OCI-LY7 (cell line): ENCODE measurements at regions of chr9 and their contacts with region 1.

Region 1: GRCh38 chr9:88388172-88388885 is at the start of gene SPIN1:
- DNase-seq: peak; percentile 81
- H3K4me3 ChIP-seq: peak within 1 kb of the TSS; percentile 80
- H3K27ac ChIP-seq: no peak within 1 kb of the TSS
- H3K4me1 ChIP-seq: peaks cover 15% of the 10 kb centered on the region
- CTCF ChIP-seq: 0 out of 2 replicates have a peak, but pooled peaks have one; percentile 9
- total RNA-seq, gene SPIN1: 20.0 and 20.1 TPM in 2 replicates

Region 2: GRCh38 chr9:88161144-88161543 is 227.2 kb before region 1 on chr9:
- CTCF ChIA-PET with region 1: no interaction called
- POLR2A ChIA-PET with region 1: no interaction called
- intact Hi-C with region 1: no loop called
- DNase-seq: no peak
- H3K4me3 ChIP-seq: no peak overlapping the region
- H3K27ac ChIP-seq: no peak overlapping the region
- H3K4me1 ChIP-seq: no peaks in the 10 kb centered on the region
- CTCF ChIP-seq: no peak

Region 3: DNA sequence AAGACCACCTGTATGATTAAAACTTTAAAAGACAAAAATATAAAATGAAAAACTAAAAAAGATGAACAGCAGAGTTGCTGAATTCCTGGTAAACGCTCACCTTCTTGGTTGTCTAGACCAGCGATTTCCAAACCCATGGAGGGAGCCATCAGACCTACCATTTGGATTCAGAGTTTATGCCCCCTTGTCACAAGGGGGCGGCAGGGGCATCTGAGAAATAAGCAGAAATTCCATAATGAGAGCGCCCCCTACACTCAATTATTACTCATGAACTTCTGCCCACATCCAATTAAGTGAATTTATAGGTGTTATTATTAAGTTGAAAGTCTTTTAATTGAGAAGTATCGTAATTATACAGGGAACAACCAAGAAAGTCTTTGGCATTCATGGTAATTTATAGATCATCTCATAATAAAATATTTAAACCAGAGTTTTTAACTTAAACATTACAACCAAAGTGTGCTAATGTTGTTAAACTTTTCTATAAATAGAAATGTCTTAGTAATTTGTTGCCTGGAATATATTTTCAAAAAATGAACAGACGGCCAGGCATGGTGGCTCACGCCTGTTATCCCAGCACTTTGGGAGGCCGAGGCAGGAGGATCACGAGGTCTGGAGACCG is 214.8 kb before region 1 on chr9:
- CTCF ChIA-PET with region 1: no interaction called
- POLR2A ChIA-PET with region 1: no interaction called
- intact Hi-C with region 1: loop called (anchors 10 kb)
- DNase-seq: peak; percentile 82
- H3K4me3 ChIP-seq: no peak overlapping the region
- H3K27ac ChIP-seq: no peak overlapping the region
- H3K4me1 ChIP-seq: no peaks in the 10 kb centered on the region
- CTCF ChIP-seq: peak; percentile 100

Region 4: GRCh38 chr9:88197016-88197415 is 191.3 kb before region 1 on chr9:
- CTCF ChIA-PET with region 1: no interaction called
- POLR2A ChIA-PET with region 1: no interaction called
- intact Hi-C with region 1: no loop called
- DNase-seq: no peak
- H3K4me3 ChIP-seq: no peak overlapping the region
- H3K27ac ChIP-seq: no peak overlapping the region
- H3K4me1 ChIP-seq: no peaks in the 10 kb centered on the region
- CTCF ChIP-seq: no peak

Region 5: GRCh38 chr9:88322906-88323566 is 65.3 kb before region 1 on chr9:
- CTCF ChIA-PET with region 1: no interaction called
- POLR2A ChIA-PET with region 1: no interaction called
- intact Hi-C with region 1: loop called (anchors 2 kb)
- DNase-seq: peak; percentile 78
- H3K4me3 ChIP-seq: peak overlapping the region; percentile 13
- H3K27ac ChIP-seq: peak overlapping the region; percentile 38
- H3K4me1 ChIP-seq: peaks cover 27% of the 10 kb centered on the region
- CTCF ChIP-seq: no peak

Region 6: DNA sequence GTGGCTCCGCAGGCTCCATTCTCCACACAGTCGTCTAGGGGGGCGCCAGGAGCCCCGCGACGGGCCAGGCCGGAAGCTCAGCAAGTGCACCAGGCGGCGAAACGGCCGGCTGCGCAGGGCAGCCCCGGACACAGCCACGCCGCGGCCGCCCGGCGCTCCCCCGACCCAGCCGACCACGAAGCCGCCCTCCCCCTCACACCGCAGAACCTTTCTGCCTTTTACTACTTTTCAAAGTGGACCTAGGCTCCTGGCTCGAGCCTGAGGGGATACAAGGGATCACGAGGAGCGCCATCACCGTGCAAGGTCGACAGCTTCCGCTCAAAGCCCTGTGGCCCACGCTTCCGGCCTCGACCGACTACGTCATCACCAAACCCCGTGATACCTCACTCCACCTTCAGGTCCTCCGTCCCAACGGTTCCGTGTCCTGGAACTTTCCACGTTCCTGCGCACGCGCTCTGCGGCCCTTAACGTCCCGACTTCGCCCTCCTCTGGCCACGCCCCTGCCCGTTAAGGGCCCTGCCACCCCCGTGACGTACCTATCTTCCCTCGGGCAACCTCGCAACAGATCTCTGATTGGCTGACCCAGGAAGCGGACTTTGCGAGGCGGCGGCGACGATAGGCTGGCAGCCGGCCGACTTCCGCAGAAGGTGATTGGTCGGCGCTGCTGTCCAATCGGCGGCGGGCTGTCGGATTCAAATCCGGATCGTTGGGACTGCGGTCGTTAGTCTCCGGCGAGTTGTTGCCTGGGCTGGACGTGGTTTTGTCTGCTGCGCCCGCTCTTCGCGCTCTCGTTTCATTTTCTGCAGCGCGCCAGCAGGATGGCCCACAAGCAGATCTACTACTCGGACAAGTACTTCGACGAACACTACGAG is 922.4 kb after region 1 on chr9 and contains the start of gene CKS2:
- CTCF ChIA-PET with region 1: no interaction called
- POLR2A ChIA-PET with region 1: no interaction called
- intact Hi-C with region 1: loop called (anchors 5 kb)
- DNase-seq: peak; percentile 100
- H3K4me3 ChIP-seq: peak within 1 kb of the TSS; percentile 100
- H3K27ac ChIP-seq: peak within 1 kb of the TSS; percentile 92
- H3K4me1 ChIP-seq: peaks cover 44% of the 10 kb centered on the region
- CTCF ChIP-seq: peak; percentile 50; the same call in 1 of the 2 replicates
- total RNA-seq, gene CKS2: 229 and 299 TPM in 2 replicates